Heart left ventricle (tissue), 16 donors: ENCODE measurements at regions of chr15 and their contacts with region 1.

Region 1: GRCh38 chr15:76973362-76973743 is 21.6 kb upstream of the PSTPIP1 start:
- DNase-seq: peak; percentile 50 to 73 (median 65)
- ATAC-seq: peak; percentile 47 to 83 (median 62)
- H3K4me3 ChIP-seq: peak overlapping the region in 8 of 12 donors; percentile 19 to 47 (median 40)
- H3K27ac ChIP-seq: peak overlapping the region in 9 of 12 donors; percentile 3 to 83 (median 67)
- H3K4me1 ChIP-seq: peaks cover 0 to 22% (median 14%) of the 10 kb centered on the region in 12 donors
- H3K27me3 ChIP-seq: no peaks in the 10 kb centered on the region
- CTCF ChIP-seq: peak; percentile 30 to 67 (median 57)
- POLR2A ChIP-seq: no peak

Region 2: DNA sequence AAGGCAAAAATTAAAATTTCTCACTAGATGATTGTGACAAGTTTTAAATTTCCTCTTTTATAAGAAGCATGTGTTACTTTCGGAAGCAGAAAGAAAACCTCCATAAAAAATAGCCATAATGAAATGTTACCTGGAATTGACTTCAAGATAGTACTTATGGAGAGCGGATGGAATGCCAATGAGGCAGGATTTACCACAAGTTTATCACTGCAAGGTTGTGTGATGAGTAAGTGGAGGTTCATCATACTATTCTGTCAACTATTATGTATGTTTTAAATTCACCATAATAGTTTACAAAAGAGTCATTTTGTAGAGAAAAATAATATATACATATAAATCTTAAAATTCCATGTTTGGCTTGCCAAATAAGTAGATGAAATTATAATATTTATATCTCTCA is 298.5 kb before region 1 on chr15:
- intact Hi-C with region 1: no loop called
- DNase-seq: no peak
- ATAC-seq: no peak
- H3K4me3 ChIP-seq: no peak overlapping the region
- H3K27ac ChIP-seq: no peak overlapping the region
- H3K4me1 ChIP-seq: peaks cover 0 to 12% (median 0%) of the 10 kb centered on the region in 12 donors
- H3K27me3 ChIP-seq: no peaks in the 10 kb centered on the region
- CTCF ChIP-seq: no peak
- POLR2A ChIP-seq: no peak

Region 3: DNA sequence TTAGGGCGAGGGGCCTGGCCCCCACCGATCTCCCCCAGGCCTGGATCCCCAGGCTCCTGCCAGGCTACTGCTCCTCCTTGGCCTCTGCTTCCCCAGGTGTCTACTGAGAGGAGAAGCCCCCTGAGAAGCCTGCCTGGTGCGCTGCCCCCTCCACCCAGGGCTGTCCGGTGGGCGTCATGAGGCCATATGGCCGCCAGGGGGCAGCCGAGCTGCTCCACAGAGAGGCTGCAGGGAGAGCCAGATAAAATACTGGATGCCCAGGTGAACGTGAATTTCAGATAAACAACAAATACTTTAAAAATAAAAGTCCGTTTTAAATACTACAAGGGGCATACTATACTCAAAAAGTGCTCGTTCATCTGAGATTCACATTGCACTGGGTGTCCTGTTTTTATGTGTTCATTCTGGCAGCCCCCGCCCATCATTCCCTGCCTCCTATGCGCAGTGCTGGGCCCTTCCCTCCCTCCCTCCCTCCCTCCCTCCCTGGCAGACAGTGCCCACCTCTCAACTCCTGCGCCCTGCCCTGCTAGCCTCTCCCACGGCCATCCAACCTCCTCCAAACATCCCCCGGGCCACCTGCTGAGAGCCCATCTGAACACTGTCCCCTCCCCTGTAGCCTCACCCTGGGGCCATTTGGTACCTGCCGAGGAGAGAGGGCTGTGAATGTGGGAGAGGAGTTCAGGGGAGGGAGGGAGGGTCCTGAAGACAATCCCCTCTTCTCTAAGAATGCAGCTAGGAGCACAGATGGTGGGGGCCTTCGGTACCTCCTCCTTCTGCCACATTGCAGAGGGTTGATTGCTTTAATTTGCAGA is 51.1 kb after region 1 on chr15:
- intact Hi-C with region 1: loop called in 2 of 10 experiments (anchors 5 kb)
- DNase-seq: peak; percentile 60 to 84 (median 69)
- ATAC-seq: peak; percentile 22 to 48 (median 40)
- H3K4me3 ChIP-seq: no peak overlapping the region
- H3K27ac ChIP-seq: peak overlapping the region in 1 of 12 donors; percentile 42
- H3K4me1 ChIP-seq: peaks cover 0 to 41% (median 19%) of the 10 kb centered on the region in 12 donors
- H3K27me3 ChIP-seq: no peaks in the 10 kb centered on the region
- CTCF ChIP-seq: peak; percentile 92 to 98 (median 96)
- POLR2A ChIP-seq: no peak

Region 4: DNA sequence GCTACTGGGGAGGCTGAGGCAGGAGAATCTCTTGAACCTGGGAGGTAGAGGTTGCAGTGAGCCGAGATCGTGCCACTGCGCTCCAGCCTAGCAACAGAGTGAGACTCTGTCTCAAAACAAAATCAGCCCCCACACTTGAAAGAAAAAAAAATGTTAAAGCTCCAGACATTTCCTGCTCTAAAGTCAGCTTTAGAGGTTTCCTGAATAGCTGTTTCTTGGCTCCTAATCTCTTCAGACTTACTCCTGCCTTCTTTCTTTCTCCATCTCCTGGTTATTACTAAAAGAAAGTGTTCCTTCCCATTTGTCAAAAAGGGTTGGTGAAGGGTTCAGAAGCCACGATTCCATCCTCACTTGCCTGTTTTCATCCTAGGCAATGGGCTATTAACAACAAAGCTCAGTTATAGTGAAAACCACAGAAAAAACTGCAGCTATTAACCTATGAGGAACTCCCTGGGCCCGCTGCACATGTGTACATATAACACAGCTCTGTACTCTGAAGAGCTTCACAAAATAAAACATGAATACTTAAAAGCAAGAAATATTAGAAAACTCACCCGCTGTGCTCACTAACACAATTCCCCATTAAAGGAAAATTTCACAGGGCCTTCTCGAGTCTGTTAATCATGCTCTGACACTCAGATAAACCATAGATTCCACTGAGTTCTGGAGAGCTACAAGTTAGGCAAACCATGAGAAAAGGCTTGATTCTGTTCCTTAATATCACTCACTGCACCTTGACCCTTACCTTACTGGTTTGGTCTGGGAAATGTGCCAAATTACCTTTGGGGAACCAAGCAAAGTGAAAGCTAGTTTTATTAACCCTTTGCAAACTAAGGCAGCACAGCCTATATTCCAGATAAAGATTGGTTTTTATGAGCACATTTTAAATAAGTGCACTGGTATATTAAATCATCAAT is 187.5 kb after region 1 on chr15:
- intact Hi-C with region 1: no loop called
- DNase-seq: no peak
- ATAC-seq: peak in 2 of 4 donors; percentile 27 to 50
- H3K4me3 ChIP-seq: no peak overlapping the region
- H3K27ac ChIP-seq: peak overlapping the region in 6 of 12 donors; percentile 16 to 46 (median 43)
- H3K4me1 ChIP-seq: peaks cover 0 to 44% (median 19%) of the 10 kb centered on the region in 12 donors
- H3K27me3 ChIP-seq: no peaks in the 10 kb centered on the region
- CTCF ChIP-seq: no peak
- POLR2A ChIP-seq: no peak